ENCODE measurements at regions of chr19 and their contacts with region 1.

Region 1: DNA sequence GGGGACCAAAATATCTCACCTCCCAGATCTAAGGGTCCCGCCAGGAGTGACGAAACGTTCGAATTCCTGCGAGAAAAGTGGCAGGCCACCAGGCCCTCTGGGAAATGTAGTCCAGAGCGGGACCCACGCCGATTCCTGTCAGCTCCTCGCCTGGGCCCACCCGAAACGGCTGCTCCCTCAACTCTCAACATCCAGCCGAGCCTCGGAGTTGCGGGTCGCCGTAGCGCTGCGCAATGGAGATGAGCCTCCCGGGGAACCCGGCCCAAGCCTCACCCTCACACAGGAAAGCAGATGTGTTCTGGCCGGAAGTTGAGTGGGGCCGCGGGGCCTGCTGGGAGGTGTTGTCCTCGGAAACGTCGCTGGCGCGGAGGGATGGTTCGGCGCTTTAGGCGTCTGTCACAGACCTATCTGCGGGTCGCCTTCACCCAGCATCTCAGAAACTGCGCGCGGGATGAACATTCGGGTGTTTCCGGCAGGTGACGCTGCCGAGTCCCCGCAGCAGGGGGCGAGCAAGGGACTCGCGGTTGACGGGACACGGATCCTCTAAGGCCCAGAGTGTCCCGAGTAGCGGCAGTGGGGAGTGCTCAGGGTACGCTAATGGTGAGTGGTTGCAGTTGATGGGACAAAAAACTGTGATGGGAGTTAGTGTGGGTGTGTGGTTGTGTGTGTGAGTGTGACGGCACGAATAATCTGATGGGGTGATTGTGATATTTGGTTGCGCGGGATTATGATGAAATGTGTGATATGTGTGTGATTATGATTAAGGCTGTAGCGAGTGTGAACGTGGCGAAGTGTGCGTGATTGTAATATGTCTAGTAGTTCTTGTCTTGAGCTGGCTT is at the starts of genes ZNF568 and ZNF829:
- DNase-seq: peak; percentile 82 to 97 (median 92)
- ATAC-seq: peak; percentile 97
- H3K4me3 ChIP-seq: peak within 1 kb of the TSS; percentile 75 to 79
- H3K4me3 Mint-ChIP-seq: peak within 1 kb of the TSS; percentile 89
- H3K27ac ChIP-seq: peak within 1 kb of the TSS; percentile 80 to 95
- H3K27ac Mint-ChIP-seq: peak within 1 kb of the TSS; percentile 95
- H3K4me1 ChIP-seq: peaks cover 10% of the 10 kb centered on the region
- H3K4me1 Mint-ChIP-seq: peaks cover 36% of the 10 kb centered on the region
- H3K27me3 ChIP-seq: no peaks in the 10 kb centered on the region
- H3K27me3 Mint-ChIP-seq: no peaks in the 10 kb centered on the region
- CTCF ChIP-seq: peak; percentile 91
- total RNA-seq, gene ZNF568: 4.6 to 5.5 TPM
- total RNA-seq, gene ZNF829: 6.1 to 6.2 TPM

Region 2: DNA sequence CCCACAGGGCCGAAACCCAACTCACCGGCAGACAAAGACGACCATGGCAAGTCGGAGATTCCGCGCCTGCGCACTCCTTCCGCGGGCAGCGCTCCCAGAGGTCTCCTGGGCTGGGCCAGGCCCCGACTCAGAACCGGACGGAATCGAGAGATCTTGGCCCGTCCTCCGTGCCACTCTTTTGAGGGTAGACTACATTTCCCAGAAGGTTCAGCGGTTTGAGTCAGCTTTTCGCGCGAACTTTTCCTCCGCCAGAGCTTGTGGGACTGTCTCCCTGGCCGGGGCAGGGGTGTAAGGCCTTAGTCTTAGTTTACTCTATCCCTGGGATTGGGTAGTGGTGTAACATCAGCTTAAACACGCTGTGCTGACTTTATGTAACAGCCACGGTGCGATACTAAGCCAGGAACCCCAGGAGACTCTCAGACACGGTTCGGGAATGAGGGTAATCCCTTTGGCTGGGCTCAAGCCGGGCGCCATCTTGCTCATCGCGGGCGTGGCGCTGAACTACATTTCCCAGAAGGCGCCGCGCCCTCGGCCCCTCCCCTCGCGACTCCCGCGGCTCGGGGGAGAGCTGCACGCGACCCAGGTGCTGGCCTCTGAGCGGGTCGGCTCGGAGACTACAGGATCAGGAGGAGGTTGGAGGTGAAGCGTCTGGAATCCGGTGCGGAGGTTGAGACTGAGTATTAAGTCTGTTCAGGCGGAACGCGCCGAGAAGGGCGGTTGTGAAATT is 387.9 kb before region 1 on chr19 and contains the start of gene ZNF260:
- CTCF ChIA-PET with region 1: no interaction called
- POLR2A ChIA-PET with region 1: interaction called, 3 read pairs
- intact Hi-C with region 1: loop called (anchors 1 to 10 kb)
- DNase-seq: peak; percentile 77 to 96 (median 92)
- ATAC-seq: peak; percentile 90
- H3K4me3 ChIP-seq: peak within 1 kb of the TSS; percentile 64 to 85
- H3K4me3 Mint-ChIP-seq: peak within 1 kb of the TSS; percentile 99
- H3K27ac ChIP-seq: peak within 1 kb of the TSS; percentile 52 to 84
- H3K27ac Mint-ChIP-seq: peak within 1 kb of the TSS; percentile 96
- H3K4me1 ChIP-seq: peaks cover 21% of the 10 kb centered on the region
- H3K4me1 Mint-ChIP-seq: peaks cover 28% of the 10 kb centered on the region
- H3K27me3 ChIP-seq: no peaks in the 10 kb centered on the region
- H3K27me3 Mint-ChIP-seq: no peaks in the 10 kb centered on the region
- CTCF ChIP-seq: no peak
- total RNA-seq, gene ZNF260: 2.8 to 4.6 TPM

Region 3: GRCh38 chr19:36665832-36666231 is 250.4 kb before region 1 on chr19:
- CTCF ChIA-PET with region 1: no interaction called
- POLR2A ChIA-PET with region 1: no interaction called
- intact Hi-C with region 1: loop called in 1 of 2 experiments (anchors 1 kb)
- DNase-seq: peak in 1 of 9 experiments; percentile 8
- ATAC-seq: no peak
- H3K4me3 ChIP-seq: peak overlapping the region; percentile 62 to 63
- H3K4me3 Mint-ChIP-seq: peak overlapping the region; percentile 98
- H3K27ac ChIP-seq: peak overlapping the region; percentile 59 to 72
- H3K27ac Mint-ChIP-seq: peak overlapping the region; percentile 73
- H3K4me1 ChIP-seq: peaks cover 8% of the 10 kb centered on the region
- H3K4me1 Mint-ChIP-seq: peaks cover 35% of the 10 kb centered on the region
- H3K27me3 ChIP-seq: no peaks in the 10 kb centered on the region
- H3K27me3 Mint-ChIP-seq: no peaks in the 10 kb centered on the region
- CTCF ChIP-seq: no peak

Region 4: GRCh38 chr19:36796076-36796992 is 119.9 kb before region 1 on chr19:
- CTCF ChIA-PET with region 1: no interaction called
- POLR2A ChIA-PET with region 1: no interaction called
- intact Hi-C with region 1: loop called (anchors 1 kb)
- DNase-seq: no peak
- ATAC-seq: no peak
- H3K4me3 ChIP-seq: peak overlapping the region; percentile 92 to 97
- H3K4me3 Mint-ChIP-seq: peak overlapping the region; percentile 97
- H3K27ac ChIP-seq: peak overlapping the region; percentile 76 to 90
- H3K27ac Mint-ChIP-seq: peak overlapping the region; percentile 98
- H3K4me1 ChIP-seq: peaks cover 3% of the 10 kb centered on the region
- H3K4me1 Mint-ChIP-seq: peaks cover 21% of the 10 kb centered on the region
- H3K27me3 ChIP-seq: no peaks in the 10 kb centered on the region
- H3K27me3 Mint-ChIP-seq: peaks cover 6% of the 10 kb centered on the region
- CTCF ChIP-seq: no peak

Region 5: GRCh38 chr19:36973021-36973843 is 57.0 kb after region 1 on chr19:
- CTCF ChIA-PET with region 1: no interaction called
- POLR2A ChIA-PET with region 1: no interaction called
- intact Hi-C with region 1: loop called (anchors 1 kb)
- DNase-seq: peak; percentile 49 to 92 (median 77)
- ATAC-seq: peak; percentile 90
- H3K4me3 ChIP-seq: peak overlapping the region; percentile 59 to 100
- H3K4me3 Mint-ChIP-seq: peak overlapping the region; percentile 90
- H3K27ac ChIP-seq: peak overlapping the region; percentile 53 to 66
- H3K27ac Mint-ChIP-seq: peak overlapping the region; percentile 88
- H3K4me1 ChIP-seq: peaks cover 15% of the 10 kb centered on the region
- H3K4me1 Mint-ChIP-seq: peaks cover 24% of the 10 kb centered on the region
- H3K27me3 ChIP-seq: no peaks in the 10 kb centered on the region
- H3K27me3 Mint-ChIP-seq: no peaks in the 10 kb centered on the region
- CTCF ChIP-seq: no peak

Region 6: DNA sequence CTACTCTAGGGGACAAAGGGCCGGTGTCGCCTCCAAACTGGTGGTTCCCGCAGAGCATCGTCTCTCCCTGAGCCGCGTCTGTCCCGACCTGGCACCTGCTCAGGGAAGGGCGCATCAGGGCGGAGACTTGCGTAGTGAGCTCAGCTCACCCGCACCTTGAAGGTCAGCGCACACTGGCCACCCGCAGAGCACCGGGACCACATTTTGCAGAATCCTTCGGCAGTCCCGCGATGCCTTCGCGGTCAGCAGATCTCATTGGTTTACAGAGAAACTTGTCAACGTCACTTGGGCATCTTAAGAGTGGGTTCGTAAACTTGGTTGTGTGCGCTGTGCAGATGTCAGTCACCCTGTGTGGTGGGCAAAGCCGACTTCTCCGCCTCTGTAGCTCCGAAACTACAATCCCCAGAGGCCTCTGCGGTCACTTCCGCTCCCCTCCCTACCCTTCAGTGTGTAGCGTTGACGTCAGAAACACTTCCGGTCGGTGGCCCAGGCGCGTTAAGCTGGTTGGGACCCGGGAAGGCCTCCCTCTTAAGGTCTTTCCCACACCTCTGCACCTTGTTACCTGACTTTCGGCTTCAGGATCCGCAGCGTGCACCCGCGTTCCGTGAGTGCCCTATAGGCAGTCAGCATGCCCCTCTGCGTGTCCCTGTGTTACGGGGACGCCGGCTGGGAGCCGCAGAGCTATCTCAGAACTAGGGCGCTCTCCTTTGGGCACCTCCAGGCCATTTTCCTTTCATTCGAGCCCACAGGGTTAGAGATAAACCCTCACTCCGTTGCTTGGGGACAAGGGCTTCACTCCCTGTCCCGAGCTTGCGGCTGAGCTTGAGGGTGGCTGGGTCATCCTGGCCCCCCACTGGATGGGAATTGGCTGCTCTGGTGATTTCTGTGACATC is 418.2 kb after region 1 on chr19:
- CTCF ChIA-PET with region 1: no interaction called
- POLR2A ChIA-PET with region 1: no interaction called
- intact Hi-C with region 1: loop called in 1 of 2 experiments (anchors 1 kb)
- DNase-seq: peak; percentile 75 to 96 (median 87)
- ATAC-seq: peak; percentile 97
- H3K4me3 ChIP-seq: peak overlapping the region; percentile 46 to 74
- H3K4me3 Mint-ChIP-seq: peak overlapping the region; percentile 96
- H3K27ac ChIP-seq: peak overlapping the region; percentile 46 to 87
- H3K27ac Mint-ChIP-seq: peak overlapping the region; percentile 95
- H3K4me1 ChIP-seq: peaks cover 10% of the 10 kb centered on the region
- H3K4me1 Mint-ChIP-seq: peaks cover 47% of the 10 kb centered on the region
- H3K27me3 ChIP-seq: no peaks in the 10 kb centered on the region
- H3K27me3 Mint-ChIP-seq: no peaks in the 10 kb centered on the region
- CTCF ChIP-seq: no peak